ENCODE measurements at regions of chr3 and their contacts with region 1.

Region 1: DNA sequence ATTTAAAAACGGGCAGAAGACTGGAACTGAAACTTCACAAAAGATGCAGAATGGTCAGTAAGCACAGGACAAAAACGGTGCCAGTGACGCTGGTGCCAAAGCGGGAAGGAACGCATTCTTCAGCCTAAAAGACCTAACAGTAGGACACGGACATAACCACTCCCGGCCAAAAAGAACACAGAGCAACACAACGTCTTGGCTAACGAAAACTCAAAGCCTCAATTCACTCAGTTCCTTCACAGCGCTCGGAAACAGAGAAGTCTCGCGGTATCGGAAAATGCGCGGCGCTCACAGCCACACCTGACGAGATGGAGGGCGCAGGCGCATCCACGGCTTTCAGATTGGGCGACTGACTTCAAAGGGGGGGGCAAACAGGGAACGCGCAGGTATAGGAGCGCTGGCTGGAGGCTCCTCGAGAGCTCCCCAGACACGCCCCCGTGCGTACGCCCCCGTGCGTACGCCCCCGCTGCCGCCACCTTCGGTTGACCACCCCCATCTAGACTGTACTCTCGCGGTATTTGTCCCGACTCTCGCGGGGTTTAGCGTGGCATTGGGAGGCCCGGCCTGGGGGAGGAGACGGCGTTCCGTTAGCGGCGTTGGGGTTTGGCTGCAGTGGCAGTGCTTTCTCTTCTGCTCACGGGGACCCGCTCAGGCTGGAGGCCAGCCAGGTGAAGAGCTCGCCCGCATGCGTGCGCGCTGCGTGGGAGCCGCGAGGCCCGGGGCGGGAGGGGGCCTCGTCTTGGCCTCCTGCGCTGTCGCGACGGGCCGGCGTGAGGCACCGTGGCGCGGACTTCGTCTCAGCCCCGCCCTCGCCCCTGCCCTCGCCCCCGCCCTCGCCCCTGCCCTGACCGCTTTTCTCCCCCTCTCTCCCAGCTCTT is at the start of gene NKTR:
- DNase-seq: peak; percentile 98 to 100 (median 100)
- ATAC-seq: peak; percentile 97
- H3K4me3 ChIP-seq: peak within 1 kb of the TSS; percentile 75
- H3K4me3 Mint-ChIP-seq: peak within 1 kb of the TSS; percentile 91 to 98 (median 95)
- H3K27ac ChIP-seq: peak within 1 kb of the TSS; percentile 93
- H3K27ac Mint-ChIP-seq: peak within 1 kb of the TSS; percentile 95 to 99 (median 98)
- H3K4me1 ChIP-seq: peaks cover 11 to 25% of the 10 kb centered on the region in 2 donors
- H3K4me1 Mint-ChIP-seq: peaks cover 26 to 53% (median 43%) of the 10 kb centered on the region in 7 donors
- H3K27me3 ChIP-seq: no peaks in the 10 kb centered on the region
- H3K27me3 Mint-ChIP-seq: peaks cover 0 to 2% (median 0%) of the 10 kb centered on the region in 5 donors
- total RNA-seq, gene NKTR: 110 to 275 (median 238) TPM

Region 2: GRCh38 chr3:42613462-42613861 is 13.1 kb after region 1 on chr3:
- CTCF ChIA-PET with region 1: interaction called, 3 read pairs
- POLR2A ChIA-PET with region 1: interaction called, 28 read pairs
- intact Hi-C with region 1: loop called in 1 of 2 experiments (anchors 1 kb)
- DNase-seq: peak in 1 of 9 donors; percentile 17
- ATAC-seq: peak; percentile 63
- H3K4me3 ChIP-seq: no peak overlapping the region
- H3K4me3 Mint-ChIP-seq: peak overlapping the region in 2 of 10 donors; percentile 1 to 38
- H3K27ac ChIP-seq: no peak overlapping the region
- H3K27ac Mint-ChIP-seq: peak overlapping the region in 5 of 9 donors; percentile 1 to 49 (median 4)
- H3K4me1 ChIP-seq: peaks cover 14 to 15% of the 10 kb centered on the region in 2 donors
- H3K4me1 Mint-ChIP-seq: peaks cover 40 to 84% (median 64%) of the 10 kb centered on the region in 7 donors
- H3K27me3 ChIP-seq: no peaks in the 10 kb centered on the region
- H3K27me3 Mint-ChIP-seq: no peaks in the 10 kb centered on the region

Region 3: GRCh38 chr3:42772670-42773408 is 172.5 kb after region 1 on chr3 and contains the start of gene CCDC13:
- CTCF ChIA-PET with region 1: no interaction called
- POLR2A ChIA-PET with region 1: no interaction called
- intact Hi-C with region 1: loop called in 1 of 2 experiments (anchors 1 kb)
- DNase-seq: peak; percentile 72 to 88 (median 75)
- ATAC-seq: peak; percentile 91
- H3K4me3 ChIP-seq: peak within 1 kb of the TSS; percentile 70
- H3K4me3 Mint-ChIP-seq: peak within 1 kb of the TSS; percentile 84 to 93 (median 90)
- H3K27ac ChIP-seq: no peak within 1 kb of the TSS
- H3K27ac Mint-ChIP-seq: peak within 1 kb of the TSS in 8 of 9 donors; percentile 13 to 93 (median 87)
- H3K4me1 ChIP-seq: peaks cover 5 to 6% of the 10 kb centered on the region in 2 donors
- H3K4me1 Mint-ChIP-seq: peaks cover 9 to 13% (median 12%) of the 10 kb centered on the region in 7 donors
- H3K27me3 ChIP-seq: no peaks in the 10 kb centered on the region
- H3K27me3 Mint-ChIP-seq: peaks cover 0 to 16% (median 0%) of the 10 kb centered on the region in 5 donors
- total RNA-seq, gene CCDC13: 0.34 to 1.5 (median 0.70) TPM

Measured in naive thymus-derived CD4-positive, alpha-beta T cell (primary cell).